ENCODE measurements at regions of chr9 and their contacts with region 1.

Region 1: DNA sequence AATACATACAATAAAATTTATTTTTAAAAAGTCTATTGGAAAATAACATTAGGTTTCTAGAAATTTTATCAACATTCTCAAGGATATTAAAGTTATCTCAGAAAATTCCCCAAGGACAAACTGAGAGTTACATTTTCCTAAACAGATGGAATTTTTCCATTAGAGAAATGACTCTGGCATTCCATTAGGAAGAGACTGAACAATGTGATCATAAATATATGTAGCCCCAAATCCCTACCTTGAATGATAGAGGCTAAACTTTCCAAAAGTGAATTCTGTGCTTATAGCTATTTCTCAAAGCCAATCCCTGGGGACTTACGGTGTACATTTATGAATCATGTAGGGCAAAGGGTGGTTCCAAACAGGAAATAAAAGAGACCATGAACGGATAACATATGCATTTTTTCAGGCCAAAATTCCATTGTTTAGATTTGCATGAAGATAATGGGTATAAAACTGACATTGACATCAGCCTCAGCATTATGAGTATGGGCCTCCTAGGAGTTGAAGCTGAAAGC is 1181.0 kb upstream of the DMAC1 start:
- DNase-seq: no peak
- ATAC-seq: no peak
- H3K4me3 ChIP-seq: no peak overlapping the region
- H3K27ac ChIP-seq: no peak overlapping the region
- H3K4me1 ChIP-seq: no peaks in the 10 kb centered on the region
- H3K27me3 ChIP-seq: no peaks in the 10 kb centered on the region
- CTCF ChIP-seq: no peak

Region 2: DNA sequence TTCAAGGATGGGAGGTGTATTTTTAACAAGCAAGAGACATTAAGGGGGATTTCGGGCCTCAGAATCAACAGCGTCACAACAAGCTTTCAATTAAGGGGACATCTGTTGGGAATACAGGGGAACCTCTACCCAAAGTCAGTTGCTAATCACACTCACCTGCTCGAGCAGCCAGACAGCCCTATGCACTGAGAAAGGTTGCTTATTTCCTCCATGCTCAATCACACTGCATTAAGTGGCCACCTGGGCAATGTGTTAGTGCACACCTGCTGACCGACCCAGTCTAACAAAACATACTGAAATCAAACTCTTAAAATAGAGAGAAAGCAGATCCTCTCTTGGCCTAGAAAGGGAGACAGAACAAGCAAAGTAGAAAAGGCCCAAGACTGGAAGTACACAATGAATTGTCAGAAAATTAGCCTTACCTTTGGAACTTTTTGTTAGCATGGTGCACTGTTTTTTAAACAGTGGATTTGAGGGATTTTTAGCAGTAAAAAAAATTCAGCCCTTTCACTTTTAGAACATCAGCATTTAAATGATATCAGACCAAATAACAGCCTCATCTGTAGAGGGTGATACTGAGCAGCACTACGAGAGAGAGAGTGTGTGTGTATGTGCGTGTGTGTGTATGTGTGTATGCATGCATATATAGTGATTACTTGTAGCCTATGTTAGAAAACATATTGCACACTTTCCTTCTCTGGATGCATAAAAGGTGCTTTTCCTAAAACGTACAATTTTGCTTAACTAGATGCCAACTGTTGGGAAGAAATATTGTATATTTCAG is 62.4 kb before region 1 on chr9:
- intact Hi-C with region 1: loop called in 1 of 10 experiments (anchors 10 kb)
- DNase-seq: no peak
- ATAC-seq: no peak
- H3K4me3 ChIP-seq: no peak overlapping the region
- H3K27ac ChIP-seq: no peak overlapping the region
- H3K4me1 ChIP-seq: no peaks in the 10 kb centered on the region
- H3K27me3 ChIP-seq: no peaks in the 10 kb centered on the region
- CTCF ChIP-seq: no peak

Measured in heart right ventricle (tissue), 16 donors.